ENCODE measurements at regions of chr7 and their contacts with region 1.

Region 1: DNA sequence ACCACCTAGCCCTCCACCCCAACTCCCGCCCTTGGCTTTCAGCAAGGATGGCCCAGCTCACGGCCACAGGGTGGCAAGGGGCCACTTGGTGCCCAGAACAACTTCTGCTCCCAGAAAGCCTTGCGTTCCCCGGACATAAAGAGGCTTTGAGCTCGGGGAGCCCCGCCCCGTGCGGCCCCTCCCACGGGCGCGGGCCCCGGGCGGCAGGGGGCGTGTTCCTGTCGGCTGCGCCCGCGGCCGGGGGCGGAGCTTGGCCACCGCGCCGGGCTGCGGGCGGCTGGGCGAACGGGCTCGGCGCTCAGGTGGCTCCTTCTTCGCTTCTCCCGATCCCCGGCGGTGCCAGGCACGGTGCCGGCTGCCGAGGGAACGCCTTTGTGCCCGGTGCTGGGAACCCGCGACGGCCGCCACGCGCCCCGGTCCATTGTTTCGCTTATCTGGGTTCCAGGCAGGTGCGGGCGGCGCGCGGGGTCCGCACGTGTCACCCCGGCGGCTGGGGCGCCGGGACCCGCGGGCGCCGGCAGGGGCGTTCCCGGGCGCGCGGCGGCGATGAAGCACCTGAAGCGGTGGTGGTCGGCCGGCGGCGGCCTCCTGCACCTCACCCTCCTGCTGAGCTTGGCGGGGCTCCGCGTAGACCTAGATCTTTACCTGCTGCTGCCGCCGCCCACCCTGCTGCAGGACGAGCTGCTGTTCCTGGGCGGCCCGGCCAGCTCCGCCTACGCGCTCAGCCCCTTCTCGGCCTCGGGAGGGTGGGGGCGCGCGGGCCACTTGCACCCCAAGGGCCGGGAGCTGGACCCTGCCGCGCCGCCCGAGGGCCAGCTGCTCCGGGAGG is at the start of gene NFE2L3:
- DNase-seq: peak; percentile 85
- H3K4me3 Mint-ChIP-seq: peak within 1 kb of the TSS; percentile 90
- H3K27ac Mint-ChIP-seq: peak within 1 kb of the TSS; percentile 98
- H3K4me1 Mint-ChIP-seq: peaks cover 62% of the 10 kb centered on the region
- H3K27me3 Mint-ChIP-seq: no peaks in the 10 kb centered on the region
- total RNA-seq, gene NFE2L3: 12.0 to 15.3 TPM

Region 2: DNA sequence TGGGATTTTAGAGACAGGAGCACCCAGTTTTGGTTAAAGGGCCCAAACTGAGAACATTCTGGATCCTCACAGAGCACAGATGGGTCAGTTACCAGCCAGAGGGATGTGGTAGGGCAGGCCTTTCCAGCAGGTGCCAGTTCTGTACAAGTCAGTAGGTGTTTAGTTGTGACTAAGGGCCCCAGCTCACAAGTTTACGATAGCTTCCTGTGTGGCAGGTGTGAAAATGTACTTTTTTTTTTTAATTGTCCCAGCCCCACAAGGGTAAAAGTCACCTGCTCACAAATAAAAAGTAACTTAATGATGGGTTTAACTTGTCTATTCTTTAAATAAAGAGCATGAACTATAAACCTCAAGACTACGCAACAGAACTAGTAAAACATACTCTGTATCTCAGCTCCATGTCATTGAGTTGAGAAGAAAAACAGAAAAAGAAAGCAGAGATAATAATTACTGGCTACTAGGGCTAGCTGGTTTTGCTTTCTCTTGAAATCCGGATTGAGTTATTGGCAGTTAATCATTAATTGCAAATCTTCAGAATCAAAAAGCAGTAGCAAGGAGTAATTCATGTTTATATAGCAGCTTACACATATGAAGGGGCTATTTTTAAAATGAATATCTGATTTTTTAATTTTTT is 15.3 kb after region 1 on chr7:
- CTCF ChIA-PET with region 1: interaction called, 17 read pairs
- POLR2A ChIA-PET with region 1: no interaction called
- DNase-seq: no peak
- H3K4me3 Mint-ChIP-seq: no peak overlapping the region
- H3K27ac Mint-ChIP-seq: peak overlapping the region; percentile 63
- H3K4me1 Mint-ChIP-seq: peaks cover 45% of the 10 kb centered on the region
- H3K27me3 Mint-ChIP-seq: no peaks in the 10 kb centered on the region

Region 3: DNA sequence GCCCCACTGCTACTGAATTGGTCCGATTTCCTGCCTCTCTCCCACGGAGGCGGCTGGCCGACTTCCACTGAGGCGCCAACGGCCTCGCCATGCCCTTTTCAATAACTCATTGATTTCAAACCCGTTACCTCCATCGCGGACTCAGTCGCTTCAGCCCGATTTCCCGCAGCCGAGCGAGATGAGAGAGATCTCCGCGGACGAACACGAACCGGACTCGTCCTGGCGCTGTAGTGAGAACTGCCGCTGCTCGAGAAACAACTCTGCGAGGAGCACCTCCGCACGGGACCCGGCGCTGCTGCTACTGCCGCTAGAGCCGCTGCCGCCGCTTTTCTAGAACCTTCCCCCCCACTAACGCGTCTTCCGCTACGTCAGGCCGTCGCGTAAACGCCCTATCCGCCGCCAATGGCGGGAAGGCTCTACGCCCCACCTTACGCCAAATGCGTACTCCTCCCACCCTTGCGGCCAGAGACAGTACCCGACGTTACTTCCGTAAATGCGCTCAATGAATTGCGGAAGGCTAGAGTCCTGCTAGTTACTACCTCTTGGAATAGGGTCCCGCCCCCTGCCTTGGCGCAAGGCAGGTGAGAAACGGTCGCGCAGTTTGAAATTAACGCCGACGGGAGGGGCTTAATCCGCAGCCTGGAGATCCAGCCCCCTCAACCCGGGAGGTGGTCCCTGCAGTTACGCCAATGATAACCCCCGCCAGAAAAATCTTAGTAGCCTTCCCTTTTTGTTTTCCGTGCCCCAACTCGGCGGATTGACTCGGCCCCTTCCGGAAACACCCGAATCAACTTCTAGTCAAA is 48.5 kb after region 1 on chr7 and contains the start of gene HNRNPA2B1:
- CTCF ChIA-PET with region 1: interaction called, 4 read pairs
- POLR2A ChIA-PET with region 1: interaction called, 10 read pairs
- DNase-seq: peak; percentile 98
- H3K4me3 Mint-ChIP-seq: peak within 1 kb of the TSS; percentile 97
- H3K27ac Mint-ChIP-seq: peak within 1 kb of the TSS; percentile 100
- H3K4me1 Mint-ChIP-seq: peaks cover 44% of the 10 kb centered on the region
- H3K27me3 Mint-ChIP-seq: no peaks in the 10 kb centered on the region
- total RNA-seq, gene HNRNPA2B1: 649 to 781 TPM

Region 4: DNA sequence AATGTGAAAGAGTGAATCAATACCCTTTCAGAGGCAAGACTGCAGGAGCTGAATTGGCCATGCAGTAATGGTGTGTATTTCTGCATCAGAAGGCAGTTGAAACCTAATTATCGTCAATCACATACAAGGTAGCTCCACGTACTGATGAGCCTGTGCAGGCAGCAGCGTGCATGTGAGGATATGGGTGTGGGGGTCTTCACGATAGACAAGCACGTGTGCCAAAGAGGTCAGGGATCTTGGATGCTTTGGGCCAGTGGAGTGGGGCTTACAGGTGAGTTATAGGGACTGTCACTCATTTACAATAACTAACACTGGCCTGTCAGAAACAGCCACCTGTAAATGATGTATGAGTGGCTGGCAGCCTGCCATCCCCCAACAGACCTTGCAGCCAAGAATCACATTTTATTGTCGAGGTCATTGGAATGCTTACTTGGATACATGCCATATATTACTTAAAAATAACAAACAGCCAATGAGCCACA is 501.3 kb after region 1 on chr7:
- CTCF ChIA-PET with region 1: no interaction called
- POLR2A ChIA-PET with region 1: no interaction called
- DNase-seq: no peak
- H3K4me3 Mint-ChIP-seq: no peak overlapping the region
- H3K27ac Mint-ChIP-seq: no peak overlapping the region
- H3K4me1 Mint-ChIP-seq: no peaks in the 10 kb centered on the region
- H3K27me3 Mint-ChIP-seq: peaks cover 44% of the 10 kb centered on the region

Measured in activated CD4-positive, alpha-beta T cell treated with anti-CD3 and anti-CD28 coated beads, Interleukin-2, amount 10 ng/mL, durations not matched to agents 7 days and 5 days (primary cell).